ENCODE measurements at regions of chrX and their contacts with region 1.

Region 1: DNA sequence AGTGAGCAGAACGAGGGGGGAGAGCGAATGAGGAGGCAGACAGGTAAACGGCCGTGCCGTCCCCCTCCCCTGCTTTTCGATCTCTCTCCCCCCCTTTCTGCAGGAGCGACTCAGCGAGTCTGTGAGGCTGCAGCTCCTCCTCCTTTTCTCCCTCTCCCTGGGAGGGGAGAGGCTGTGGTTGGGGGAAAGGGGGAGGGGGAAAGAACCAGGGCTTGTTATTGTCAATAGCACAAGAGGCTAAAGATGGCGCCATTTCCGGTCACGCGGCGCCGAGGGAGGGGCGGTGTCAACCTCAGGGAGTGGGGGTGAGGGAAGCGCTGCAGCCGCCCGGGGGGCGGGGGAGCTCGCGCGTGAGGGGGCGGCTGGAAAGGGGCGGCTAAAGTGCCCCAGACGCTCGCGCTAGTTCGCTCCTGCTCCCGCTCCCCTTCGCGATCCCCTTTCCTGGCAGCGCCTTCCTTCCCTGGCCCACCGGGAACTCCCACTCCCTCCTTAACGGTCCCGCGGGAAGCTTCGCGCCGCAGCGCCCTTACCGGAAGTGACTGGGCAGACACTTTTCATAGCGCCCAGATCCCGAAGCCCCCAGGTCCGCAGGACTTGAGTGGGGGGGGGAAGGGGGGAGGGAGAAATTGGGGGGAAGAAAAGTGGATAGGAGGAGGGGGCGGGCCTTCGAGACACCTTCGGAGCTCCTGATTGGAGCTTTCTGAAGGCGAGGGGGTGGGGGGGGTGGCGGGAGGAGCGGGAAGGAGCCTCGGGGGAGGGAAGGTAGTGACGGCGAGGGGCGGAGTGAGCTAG is at the start of gene CUL4B:
- DNase-seq: peak; percentile 91
- ATAC-seq: peak; percentile 95 to 97
- total RNA-seq, gene CUL4B: 23.7 to 29.1 TPM

Region 2: DNA sequence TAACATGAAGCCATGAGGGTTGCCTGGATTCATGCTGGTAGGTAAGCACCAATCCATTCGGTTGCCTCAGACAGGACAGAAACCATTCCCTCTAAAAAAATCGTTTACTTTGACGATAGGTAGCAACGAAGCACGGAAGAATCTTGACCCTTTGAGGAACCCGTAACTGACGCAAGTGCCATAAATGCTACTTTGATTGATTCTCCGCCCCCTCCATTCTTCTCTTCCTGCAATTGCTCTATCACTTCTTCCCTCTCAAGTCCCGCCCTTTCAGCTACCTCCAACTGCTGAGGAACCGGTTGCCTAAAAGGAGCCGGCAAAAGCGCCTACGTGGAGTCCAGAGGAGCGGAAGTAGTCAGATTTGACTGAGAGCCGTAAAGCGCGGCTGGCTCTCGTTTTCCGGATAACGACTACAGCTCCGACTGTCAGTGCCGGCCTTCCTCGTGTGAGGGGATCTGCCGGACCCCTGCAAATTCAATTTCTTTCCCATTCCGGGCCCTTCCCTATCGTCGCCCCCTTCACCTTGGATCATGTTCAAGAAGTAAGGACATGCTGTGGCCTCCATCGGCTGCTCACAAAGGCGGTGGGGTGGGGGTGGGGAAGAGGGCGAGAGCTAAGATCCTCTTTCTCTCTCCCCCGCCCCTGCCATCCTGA is 42.8 kb after region 1 on chrX and contains the start of gene MCTS1:
- intact Hi-C with region 1: loop called in 1 of 2 experiments (anchors 5 kb)
- DNase-seq: peak; percentile 85
- ATAC-seq: peak; percentile 97 to 99
- total RNA-seq, gene MCTS1: 31.3 to 34.9 TPM